ENCODE measurements at regions of chr2 and their contacts with region 1.

Region 1: GRCh38 chr2:43484323-43484930 is 111.4 kb downstream of the THADA start:
- DNase-seq: peak; percentile 80
- ATAC-seq: peak; percentile 54
- H3K4me3 ChIP-seq: no peak overlapping the region
- H3K4me3 Mint-ChIP-seq: no peak overlapping the region
- H3K27ac ChIP-seq: no peak overlapping the region
- H3K27ac Mint-ChIP-seq: no peak overlapping the region
- H3K4me1 ChIP-seq: peaks cover 21 to 24% of the 10 kb centered on the region in 2 donors
- H3K4me1 Mint-ChIP-seq: peaks cover 27% of the 10 kb centered on the region
- H3K27me3 ChIP-seq: no peaks in the 10 kb centered on the region
- H3K27me3 Mint-ChIP-seq: no peaks in the 10 kb centered on the region
- CTCF ChIP-seq: peak; percentile 93

Region 2: DNA sequence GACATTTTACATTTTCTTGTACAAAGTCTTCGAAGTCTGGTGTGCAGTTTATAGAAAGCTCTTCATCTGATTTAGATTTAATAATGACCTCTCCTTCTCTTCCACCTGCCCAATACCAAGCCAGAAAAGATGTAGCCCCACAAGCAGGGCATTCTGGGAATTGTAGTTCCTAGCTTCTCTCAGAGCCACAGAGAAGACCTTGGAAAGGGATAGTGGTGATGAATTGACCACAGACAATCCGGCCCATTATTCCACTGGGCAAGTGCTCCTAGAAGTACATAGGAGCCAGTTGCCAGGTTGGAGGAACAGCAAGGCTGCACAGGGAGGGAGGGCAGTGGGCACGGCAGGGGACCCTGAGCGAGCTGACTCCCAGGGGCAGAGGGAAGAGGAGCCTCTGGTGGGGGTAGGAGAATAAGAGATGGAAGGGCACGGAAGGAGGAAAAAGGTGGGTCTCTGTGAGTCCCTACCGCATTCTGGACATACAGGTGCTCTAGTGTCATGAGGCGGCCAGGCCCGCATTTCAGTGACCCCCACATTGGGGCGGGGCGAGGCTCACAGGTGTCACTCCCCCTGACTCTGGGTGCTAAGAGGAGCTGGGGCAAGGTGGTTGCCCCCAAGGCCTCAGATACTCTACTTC is 539.5 kb before region 1 on chr2:
- CTCF ChIA-PET with region 1: interaction called, 203 read pairs
- POLR2A ChIA-PET with region 1: no interaction called
- intact Hi-C with region 1: loop called (anchors 1 kb)
- DNase-seq: no peak
- ATAC-seq: no peak
- H3K4me3 ChIP-seq: no peak overlapping the region
- H3K4me3 Mint-ChIP-seq: no peak overlapping the region
- H3K27ac ChIP-seq: no peak overlapping the region
- H3K27ac Mint-ChIP-seq: no peak overlapping the region
- H3K4me1 ChIP-seq: peaks cover 30 to 33% of the 10 kb centered on the region in 2 donors
- H3K4me1 Mint-ChIP-seq: peaks cover 33% of the 10 kb centered on the region
- H3K27me3 ChIP-seq: no peaks in the 10 kb centered on the region
- H3K27me3 Mint-ChIP-seq: no peaks in the 10 kb centered on the region
- CTCF ChIP-seq: no peak

Region 3: DNA sequence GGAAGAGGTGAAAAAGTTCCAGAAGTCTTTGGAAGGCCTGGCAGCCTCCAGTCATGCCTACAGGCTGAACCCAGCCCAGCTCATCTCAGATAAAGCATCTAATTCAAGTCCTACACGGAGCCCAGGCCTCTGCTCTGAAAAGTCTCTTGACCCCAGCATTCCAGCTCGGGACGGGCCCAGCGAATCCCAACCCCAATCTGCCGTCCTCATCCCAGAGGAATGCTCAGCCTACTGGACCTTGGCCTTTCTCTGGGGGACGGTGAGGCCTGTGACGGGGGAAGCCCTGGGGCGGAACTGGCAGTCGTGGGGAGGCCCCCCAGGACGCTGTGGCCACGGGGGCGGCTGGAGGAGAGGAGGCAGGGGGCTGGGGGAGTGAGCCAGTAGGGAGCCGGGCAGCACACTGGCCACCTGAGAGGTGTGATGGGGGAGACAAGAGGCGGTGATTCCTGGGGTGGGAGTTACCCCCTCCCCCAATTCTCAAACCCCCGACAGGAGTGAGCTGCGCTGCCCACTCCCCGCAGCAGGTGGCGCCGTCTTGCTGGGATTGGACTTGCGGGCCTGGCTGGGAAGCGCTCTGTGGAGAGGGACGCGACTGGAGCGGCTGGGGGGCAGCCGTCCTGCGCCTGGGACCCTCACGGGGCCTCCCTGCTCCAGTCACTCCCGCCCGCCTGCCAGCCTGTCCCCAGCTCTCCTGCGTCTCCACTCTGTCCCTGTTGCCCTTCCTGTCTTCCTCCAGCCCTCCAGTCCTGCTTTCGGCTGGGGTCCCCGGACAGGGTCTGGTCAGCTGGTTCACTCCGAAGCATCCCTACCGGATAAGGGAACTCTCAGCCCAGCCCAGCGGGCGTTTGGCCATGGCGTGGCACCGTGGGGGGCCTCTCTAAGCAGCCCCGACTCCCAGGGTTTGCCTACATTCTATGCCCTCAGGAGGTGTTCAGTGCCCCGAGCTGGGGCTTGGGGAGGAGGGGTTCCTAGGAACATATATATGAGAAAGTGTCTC is 509.4 kb before region 1 on chr2:
- CTCF ChIA-PET with region 1: interaction called, 85 read pairs
- POLR2A ChIA-PET with region 1: no interaction called
- intact Hi-C with region 1: loop called (anchors 1 kb)
- DNase-seq: peak; percentile 69
- ATAC-seq: peak; percentile 78
- H3K4me3 ChIP-seq: no peak overlapping the region
- H3K4me3 Mint-ChIP-seq: peak overlapping the region; percentile 26
- H3K27ac ChIP-seq: no peak overlapping the region
- H3K27ac Mint-ChIP-seq: no peak overlapping the region
- H3K4me1 ChIP-seq: peaks cover 30 to 31% of the 10 kb centered on the region in 2 donors
- H3K4me1 Mint-ChIP-seq: peaks cover 35% of the 10 kb centered on the region
- H3K27me3 ChIP-seq: peaks cover 0 to 3% (median 0%) of the 10 kb centered on the region in 4 experiments
- H3K27me3 Mint-ChIP-seq: no peaks in the 10 kb centered on the region
- CTCF ChIP-seq: peak; percentile 75

Region 4: DNA sequence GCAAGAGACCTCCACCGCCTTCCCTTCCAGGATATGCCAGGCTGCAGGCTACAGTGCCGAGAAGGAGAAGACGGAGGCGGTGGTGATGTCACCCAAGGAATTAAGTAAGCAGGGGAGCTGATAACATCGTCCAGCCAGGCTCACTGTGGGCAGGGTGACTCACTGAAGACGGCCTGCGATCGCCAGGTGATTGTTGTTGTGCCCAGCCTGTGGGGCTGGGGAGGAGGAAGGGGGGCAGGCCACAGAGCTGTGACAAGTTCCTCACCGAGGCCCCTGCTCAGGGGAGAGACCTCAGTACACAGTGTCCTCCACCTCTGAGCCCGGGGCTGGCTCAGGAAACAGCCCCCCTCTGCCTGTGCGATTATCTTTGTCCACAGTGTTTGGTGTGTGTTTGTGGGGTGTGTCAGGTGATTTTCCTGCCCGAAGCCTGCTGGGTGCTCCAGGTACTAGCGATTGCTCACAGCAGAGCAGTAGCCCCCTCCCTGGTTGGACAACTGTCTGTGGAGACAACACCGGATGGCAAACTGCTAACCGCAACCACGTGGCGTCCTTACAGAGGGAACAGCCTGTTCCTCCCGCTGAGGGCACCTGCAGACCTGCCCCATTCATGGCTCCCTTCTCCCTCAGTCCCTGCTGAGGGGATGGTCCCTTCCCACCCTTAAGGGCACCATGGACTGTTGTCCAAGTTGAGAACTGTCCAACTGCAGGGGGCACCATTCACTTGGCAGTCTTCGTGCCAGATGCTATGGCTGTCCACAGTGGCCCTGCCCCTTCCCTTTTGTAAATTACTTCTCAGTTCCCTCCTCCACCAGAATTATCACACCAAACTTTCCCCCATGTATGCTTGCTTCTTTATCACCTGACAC is 353.2 kb before region 1 on chr2:
- CTCF ChIA-PET with region 1: interaction called, 60 read pairs
- POLR2A ChIA-PET with region 1: no interaction called
- intact Hi-C with region 1: loop called (anchors 1 kb)
- DNase-seq: peak; percentile 90
- ATAC-seq: peak; percentile 54
- H3K4me3 ChIP-seq: peak overlapping the region in 1 of 5 experiments; percentile 19
- H3K4me3 Mint-ChIP-seq: peak overlapping the region; percentile 55
- H3K27ac ChIP-seq: peak overlapping the region; percentile 87 to 89
- H3K27ac Mint-ChIP-seq: peak overlapping the region; percentile 83
- H3K4me1 ChIP-seq: peaks cover 89 to 100% of the 10 kb centered on the region in 2 donors
- H3K4me1 Mint-ChIP-seq: peaks cover 92% of the 10 kb centered on the region
- H3K27me3 ChIP-seq: peaks cover 0 to 2% (median 0%) of the 10 kb centered on the region in 4 experiments
- H3K27me3 Mint-ChIP-seq: no peaks in the 10 kb centered on the region
- CTCF ChIP-seq: peak; percentile 69

Region 5: GRCh38 chr2:43464590-43464989 is 19.8 kb before region 1 on chr2:
- CTCF ChIA-PET with region 1: interaction called, 11 read pairs
- POLR2A ChIA-PET with region 1: interaction called, 5 read pairs
- intact Hi-C with region 1: no loop called
- DNase-seq: no peak
- ATAC-seq: no peak
- H3K4me3 ChIP-seq: no peak overlapping the region
- H3K4me3 Mint-ChIP-seq: no peak overlapping the region
- H3K27ac ChIP-seq: no peak overlapping the region
- H3K27ac Mint-ChIP-seq: no peak overlapping the region
- H3K4me1 ChIP-seq: peaks cover 10 to 13% of the 10 kb centered on the region in 2 donors
- H3K4me1 Mint-ChIP-seq: peaks cover 23% of the 10 kb centered on the region
- H3K27me3 ChIP-seq: no peaks in the 10 kb centered on the region
- H3K27me3 Mint-ChIP-seq: no peaks in the 10 kb centered on the region
- CTCF ChIP-seq: no peak

Region 6: DNA sequence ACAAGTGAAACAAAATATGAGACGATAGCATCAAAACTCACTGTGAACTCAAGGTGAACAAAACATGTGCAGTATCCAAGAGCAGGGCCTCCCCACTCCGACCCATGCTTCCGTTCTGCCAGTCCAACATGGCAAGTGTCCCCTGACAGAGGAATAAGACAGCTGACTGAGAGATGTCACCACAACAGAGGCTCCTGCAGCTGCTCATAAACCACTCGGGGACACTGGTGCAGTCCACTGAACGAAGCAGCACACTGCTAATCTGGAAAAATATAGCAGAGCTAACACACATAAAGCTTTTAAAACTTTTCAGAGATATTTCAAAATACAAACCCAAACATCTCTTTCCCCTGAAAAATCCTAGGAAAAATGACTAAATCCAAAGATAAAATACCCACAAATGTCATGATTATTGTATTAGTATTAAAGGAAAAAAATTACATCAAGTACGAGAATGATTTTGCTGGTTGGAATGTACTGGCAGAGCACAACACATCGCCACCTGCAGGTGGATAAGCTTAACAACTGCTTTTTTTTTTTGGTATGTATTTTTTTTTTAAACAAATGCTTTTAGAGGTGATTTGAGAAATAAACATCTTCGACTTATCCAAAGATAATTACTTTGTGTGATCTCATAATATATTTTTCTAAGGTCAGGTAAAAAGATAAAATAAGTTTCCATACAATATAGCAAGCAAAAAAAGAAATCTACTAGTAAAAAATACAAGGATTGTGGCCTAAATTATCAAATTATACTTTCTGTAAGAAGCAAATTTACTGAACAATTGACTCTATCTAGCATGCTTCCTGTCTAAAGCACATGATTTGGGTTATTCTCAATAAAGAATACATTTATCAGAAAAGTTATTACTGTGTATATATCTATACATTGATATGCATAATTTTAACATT is 92.8 kb after region 1 on chr2:
- CTCF ChIA-PET with region 1: interaction called, 13 read pairs
- POLR2A ChIA-PET with region 1: no interaction called
- intact Hi-C with region 1: no loop called
- DNase-seq: peak; percentile 60
- ATAC-seq: no peak
- H3K4me3 ChIP-seq: no peak overlapping the region
- H3K4me3 Mint-ChIP-seq: no peak overlapping the region
- H3K27ac ChIP-seq: no peak overlapping the region
- H3K27ac Mint-ChIP-seq: no peak overlapping the region
- H3K4me1 ChIP-seq: no peaks in the 10 kb centered on the region
- H3K4me1 Mint-ChIP-seq: no peaks in the 10 kb centered on the region
- H3K27me3 ChIP-seq: no peaks in the 10 kb centered on the region
- H3K27me3 Mint-ChIP-seq: no peaks in the 10 kb centered on the region
- CTCF ChIP-seq: peak; percentile 95

Region 7: DNA sequence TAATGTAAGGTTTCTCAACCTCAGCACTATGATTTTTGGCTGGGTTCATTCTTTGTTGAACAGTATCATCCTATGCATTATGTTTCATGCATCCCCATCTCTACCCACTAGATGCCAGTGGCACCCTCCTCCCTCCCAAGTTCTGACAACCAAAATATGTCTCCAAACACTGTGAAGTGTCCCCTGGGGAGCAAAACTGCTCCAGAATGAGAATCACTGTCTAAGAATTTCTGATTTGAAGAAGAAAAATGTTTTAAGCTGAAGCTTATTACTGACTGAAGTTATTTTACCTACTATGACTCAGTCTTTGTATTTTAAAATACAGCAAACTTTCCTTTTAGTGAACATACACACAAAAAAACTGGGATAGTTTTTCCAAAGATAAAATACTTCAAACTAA is 108.0 kb after region 1 on chr2:
- CTCF ChIA-PET with region 1: no interaction called
- POLR2A ChIA-PET with region 1: no interaction called
- intact Hi-C with region 1: no loop called
- DNase-seq: no peak
- ATAC-seq: no peak
- H3K4me3 ChIP-seq: no peak overlapping the region
- H3K4me3 Mint-ChIP-seq: no peak overlapping the region
- H3K27ac ChIP-seq: no peak overlapping the region
- H3K27ac Mint-ChIP-seq: no peak overlapping the region
- H3K4me1 ChIP-seq: peaks cover 12 to 21% of the 10 kb centered on the region in 2 donors
- H3K4me1 Mint-ChIP-seq: peaks cover 24% of the 10 kb centered on the region
- H3K27me3 ChIP-seq: no peaks in the 10 kb centered on the region
- H3K27me3 Mint-ChIP-seq: no peaks in the 10 kb centered on the region
- CTCF ChIP-seq: no peak

Measured in B cell (primary cell).